GM10248 (cell line): ENCODE measurements at regions of chr4 and their contacts with region 1.

Region 1: GRCh38 chr4:153432968-153433753 is 33.0 kb upstream of the TMEM131L start:
- DNase-seq: peak; percentile 83
- CTCF ChIP-seq: peak; percentile 82

Region 2: DNA sequence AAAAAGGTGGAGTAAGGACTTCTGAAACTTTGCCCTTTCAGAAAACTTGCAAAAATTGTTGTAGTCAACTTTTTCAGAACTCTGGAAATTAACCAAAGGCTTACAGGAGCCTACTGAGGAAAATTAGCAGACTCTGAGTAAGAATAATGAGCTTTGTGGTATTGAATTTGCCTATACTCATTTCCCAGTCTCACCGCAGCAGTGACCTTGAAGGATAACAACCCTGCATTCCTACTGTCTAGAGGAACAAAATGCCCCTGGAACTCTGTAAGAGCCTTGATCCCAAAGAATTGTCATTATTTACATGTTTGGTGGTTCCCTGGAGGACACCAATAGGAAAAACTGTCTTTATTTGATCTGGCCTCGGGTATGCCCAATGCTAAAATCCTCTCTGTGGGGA is 30.8 kb before region 1 on chr4:
- CTCF ChIA-PET with region 1: no interaction called
- POLR2A ChIA-PET with region 1: no interaction called
- DNase-seq: no peak
- CTCF ChIP-seq: no peak

Region 3: DNA sequence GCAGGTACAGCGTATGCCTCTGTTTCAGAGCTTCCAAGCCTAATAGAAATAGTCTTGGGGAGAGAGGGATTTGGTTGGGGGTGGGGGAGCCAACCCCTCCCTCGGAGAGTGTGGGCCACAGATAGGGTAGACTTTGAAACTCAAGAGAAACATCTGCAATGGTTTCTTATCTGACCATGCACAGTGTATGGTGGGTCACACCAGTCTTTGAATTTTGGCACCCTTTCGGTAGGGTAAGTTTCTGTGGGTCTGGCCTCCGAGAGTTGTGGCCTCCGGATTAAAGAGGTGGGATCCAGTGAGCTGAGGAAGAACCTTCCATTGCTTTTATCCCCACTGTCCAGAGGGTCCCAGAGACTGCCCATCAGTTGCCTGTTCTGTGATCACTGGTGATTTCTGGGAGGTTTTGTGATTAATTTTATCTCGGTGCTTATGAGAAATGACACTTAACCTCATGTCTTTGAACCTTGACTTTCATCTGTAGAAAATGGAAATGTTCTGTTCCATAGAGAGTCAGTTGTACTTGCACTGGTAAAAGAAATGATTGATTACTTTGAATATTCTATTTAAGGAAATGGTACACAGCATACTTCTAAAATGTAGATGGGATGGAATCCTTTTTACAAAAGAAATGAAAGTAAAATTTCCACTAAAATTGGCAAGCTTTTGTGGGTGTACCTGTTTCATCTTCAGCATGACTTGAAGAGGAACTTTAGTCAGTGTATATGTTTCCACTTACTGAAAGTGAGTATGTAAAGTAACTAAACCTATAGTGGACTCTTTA is 95.7 kb after region 1 on chr4:
- CTCF ChIA-PET with region 1: interaction called, 12 read pairs
- POLR2A ChIA-PET with region 1: no interaction called
- DNase-seq: no peak
- CTCF ChIP-seq: no peak

Region 4: DNA sequence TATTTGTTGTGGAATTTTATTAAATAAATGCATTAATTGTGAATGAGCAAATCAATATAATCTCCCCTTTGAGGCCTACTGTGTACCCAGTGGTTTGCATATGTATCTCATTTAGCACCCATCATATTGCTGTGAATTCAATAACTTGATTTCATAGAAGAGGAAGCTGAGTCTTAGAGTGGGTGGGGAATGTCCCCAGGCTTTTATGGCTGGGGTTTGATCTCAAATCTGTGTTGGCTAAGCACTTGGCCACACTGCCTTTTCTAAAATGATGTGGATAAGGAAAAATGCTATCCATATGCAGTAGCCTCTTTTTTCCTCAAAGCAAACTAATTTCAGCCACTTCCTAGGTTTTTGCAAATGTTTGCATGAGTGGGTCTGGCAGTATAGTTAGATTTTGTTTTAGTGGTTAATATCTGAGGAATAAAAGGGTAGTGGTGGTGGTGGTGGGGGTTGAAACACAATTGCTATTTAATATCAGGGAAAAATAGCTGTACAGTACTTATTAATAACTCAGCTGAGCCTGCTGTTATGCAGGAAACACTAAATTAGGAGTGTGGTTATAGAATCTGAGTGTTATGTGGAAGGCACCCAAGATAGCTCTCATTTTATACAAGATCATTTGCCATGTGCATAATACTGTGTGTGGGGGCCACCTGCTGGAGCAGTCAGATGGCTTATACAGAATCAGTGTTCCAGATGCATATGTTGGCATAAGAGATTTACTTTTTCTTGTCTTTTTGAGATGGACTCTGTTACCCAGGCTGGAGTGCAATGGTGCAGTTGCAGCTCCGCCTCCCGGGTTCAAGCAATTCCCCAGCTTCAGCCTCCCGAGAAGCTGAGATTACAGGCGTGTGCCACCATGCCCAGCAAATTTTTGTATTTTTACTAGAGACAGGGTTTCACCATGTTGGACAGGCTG is 141.0 kb after region 1 on chr4:
- CTCF ChIA-PET with region 1: interaction called, 11 read pairs
- POLR2A ChIA-PET with region 1: no interaction called
- DNase-seq: peak; percentile 43
- CTCF ChIP-seq: peak; percentile 56

Region 5: GRCh38 chr4:153661211-153661822 is 228.2 kb after region 1 on chr4:
- CTCF ChIA-PET with region 1: no interaction called
- POLR2A ChIA-PET with region 1: no interaction called
- DNase-seq: no peak
- CTCF ChIP-seq: no peak

Region 6: GRCh38 chr4:153705743-153706468 is 272.7 kb after region 1 on chr4:
- CTCF ChIA-PET with region 1: no interaction called
- POLR2A ChIA-PET with region 1: no interaction called
- DNase-seq: no peak
- CTCF ChIP-seq: no peak